ENCODE measurements at regions of chr4 and their contacts with region 1.

Region 1: DNA sequence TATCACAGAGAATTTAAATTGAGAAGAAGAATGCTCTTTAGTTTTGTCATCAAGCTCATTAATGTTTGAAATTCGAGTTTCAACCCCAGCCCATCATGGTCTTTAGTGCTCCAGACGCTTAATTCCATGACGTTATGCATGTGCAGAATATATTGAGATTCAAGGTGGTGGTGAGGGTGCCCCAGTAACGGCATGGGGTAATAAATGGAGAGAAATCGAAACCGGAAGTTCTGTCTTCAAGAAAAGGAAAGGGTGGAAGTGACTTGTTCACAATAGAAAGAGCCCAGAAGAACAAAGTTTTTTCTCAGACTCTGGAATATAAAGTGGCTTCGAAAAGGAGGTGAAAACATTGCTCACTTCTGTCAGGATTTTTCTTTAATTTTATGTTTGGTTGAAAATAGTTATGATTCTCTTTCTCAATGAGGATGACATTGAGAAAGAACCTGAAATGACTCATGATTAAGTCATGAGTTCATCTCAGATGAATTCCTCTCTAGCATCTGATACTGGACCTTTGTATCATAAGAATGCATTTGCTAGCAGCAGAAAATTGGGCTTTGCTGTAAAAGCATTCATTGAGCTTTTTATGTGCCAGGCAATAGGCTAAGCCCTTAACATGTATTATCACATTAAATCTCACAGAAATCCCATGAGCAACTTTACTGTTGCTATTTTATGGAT is 779 bp upstream of the DDX60L start:
- DNase-seq: peak; percentile 28 to 71
- H3K4me3 ChIP-seq: peak overlapping the region; percentile 82
- H3K27ac ChIP-seq: peak overlapping the region; percentile 95
- H3K4me1 ChIP-seq: peaks cover 30% of the 10 kb centered on the region
- H3K27me3 ChIP-seq: no peaks in the 10 kb centered on the region
- CTCF ChIP-seq: no peak

Region 2: GRCh38 chr4:168092176-168092712 is 388.8 kb before region 1 on chr4 and contains the start of gene ANXA10:
- CTCF ChIA-PET with region 1: no interaction called
- POLR2A ChIA-PET with region 1: no interaction called
- intact Hi-C with region 1: no loop called
- DNase-seq: no peak
- H3K4me3 ChIP-seq: no peak within 1 kb of the TSS
- H3K27ac ChIP-seq: no peak within 1 kb of the TSS
- H3K4me1 ChIP-seq: peaks cover 13% of the 10 kb centered on the region
- H3K27me3 ChIP-seq: no peaks in the 10 kb centered on the region
- CTCF ChIP-seq: no peak
- total RNA-seq, gene ANXA10: 1.1 and 3.0 TPM in 2 replicates

Region 3: DNA sequence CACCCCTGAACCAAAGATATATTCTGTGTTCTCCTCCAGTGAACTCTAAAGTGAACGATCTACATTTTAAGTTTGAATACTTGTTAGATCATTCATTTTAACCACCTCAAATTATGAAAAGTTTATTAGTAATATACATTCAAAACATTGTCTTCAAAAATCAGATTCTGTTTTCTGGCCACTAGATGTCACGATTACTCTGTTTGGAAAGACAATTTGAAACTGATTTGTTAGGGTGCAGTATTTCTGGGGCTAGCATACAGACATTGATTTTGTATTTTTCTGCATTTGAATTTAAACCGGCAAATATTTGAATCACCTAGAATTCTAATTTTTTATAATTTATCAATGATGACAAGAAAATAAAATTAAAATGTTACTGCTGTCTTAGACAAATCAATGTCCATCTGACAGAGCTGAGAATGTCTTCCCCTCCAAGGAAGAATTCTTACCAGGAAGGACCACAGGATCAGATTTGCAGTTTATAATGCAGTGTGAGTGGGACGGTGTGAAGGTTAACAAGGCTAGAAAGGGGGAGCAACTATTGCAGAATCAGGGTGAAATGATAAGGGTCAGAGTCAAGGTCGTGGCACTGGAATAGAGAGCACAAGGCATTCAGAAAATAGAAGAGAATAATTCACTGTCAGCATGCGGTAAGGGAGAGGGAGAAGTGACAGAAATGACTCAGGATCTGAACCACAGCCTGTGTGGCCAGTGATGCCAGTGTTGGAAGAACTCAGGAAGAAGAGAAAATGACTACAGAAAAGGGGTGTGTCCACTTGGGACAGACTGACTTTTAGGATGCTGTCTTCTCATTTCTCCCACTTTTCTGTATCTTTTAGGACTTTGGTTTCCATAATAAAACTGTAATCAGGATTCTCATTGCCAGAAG is 297.1 kb before region 1 on chr4:
- CTCF ChIA-PET with region 1: no interaction called
- POLR2A ChIA-PET with region 1: no interaction called
- intact Hi-C with region 1: loop called (anchors 10 kb)
- DNase-seq: no peak
- H3K4me3 ChIP-seq: no peak overlapping the region
- H3K27ac ChIP-seq: no peak overlapping the region
- H3K4me1 ChIP-seq: no peaks in the 10 kb centered on the region
- H3K27me3 ChIP-seq: no peaks in the 10 kb centered on the region
- CTCF ChIP-seq: peak; percentile 78

Region 4: GRCh38 chr4:168421671-168422070 is 59.4 kb before region 1 on chr4:
- CTCF ChIA-PET with region 1: no interaction called
- POLR2A ChIA-PET with region 1: no interaction called
- intact Hi-C with region 1: loop called (anchors 5 kb)
- DNase-seq: peak; percentile 44 to 52
- H3K4me3 ChIP-seq: no peak overlapping the region
- H3K27ac ChIP-seq: no peak overlapping the region
- H3K4me1 ChIP-seq: peaks cover 14% of the 10 kb centered on the region
- H3K27me3 ChIP-seq: no peaks in the 10 kb centered on the region
- CTCF ChIP-seq: no peak

Region 5: GRCh38 chr4:168551945-168552695 is 71.0 kb after region 1 on chr4:
- CTCF ChIA-PET with region 1: no interaction called
- POLR2A ChIA-PET with region 1: interaction called, 19 read pairs
- intact Hi-C with region 1: no loop called
- DNase-seq: no peak
- H3K4me3 ChIP-seq: no peak overlapping the region
- H3K27ac ChIP-seq: peak overlapping the region; percentile 51
- H3K4me1 ChIP-seq: peaks cover 13% of the 10 kb centered on the region; the same call in 1 of the 2 replicates
- H3K27me3 ChIP-seq: no peaks in the 10 kb centered on the region
- CTCF ChIP-seq: no peak

Region 6: DNA sequence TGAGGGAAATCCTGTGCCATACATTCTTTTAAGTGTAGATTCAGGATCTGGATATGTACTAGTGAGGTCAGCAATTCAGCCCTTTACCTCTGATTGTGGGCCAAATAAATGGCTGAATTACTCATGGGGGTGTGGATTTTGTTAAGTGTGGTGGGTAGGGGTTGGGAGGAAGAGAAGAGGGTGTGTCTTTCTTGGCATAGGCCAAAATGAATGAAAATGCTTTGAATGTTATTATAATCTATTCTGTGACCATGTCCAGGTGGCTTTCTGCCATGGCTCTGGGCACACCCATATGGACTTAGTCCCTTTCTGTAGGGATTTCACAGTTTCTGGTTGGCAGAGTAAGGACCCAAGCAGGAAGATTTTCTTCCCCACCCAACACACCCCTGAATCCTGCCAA is 284.7 kb after region 1 on chr4:
- CTCF ChIA-PET with region 1: no interaction called
- POLR2A ChIA-PET with region 1: no interaction called
- intact Hi-C with region 1: loop called (anchors 5 kb)
- DNase-seq: peak in 1 of 2 experiments; percentile 73
- H3K4me3 ChIP-seq: no peak overlapping the region
- H3K27ac ChIP-seq: no peak overlapping the region
- H3K4me1 ChIP-seq: no peaks in the 10 kb centered on the region
- H3K27me3 ChIP-seq: no peaks in the 10 kb centered on the region
- CTCF ChIP-seq: no peak

Region 7: GRCh38 chr4:169079942-169080827 is 599.1 kb after region 1 on chr4:
- CTCF ChIA-PET with region 1: no interaction called
- POLR2A ChIA-PET with region 1: no interaction called
- intact Hi-C with region 1: loop called (anchors 10 kb)
- DNase-seq: peak in 1 of 2 experiments; percentile 15
- H3K4me3 ChIP-seq: no peak overlapping the region
- H3K27ac ChIP-seq: no peak overlapping the region
- H3K4me1 ChIP-seq: no peaks in the 10 kb centered on the region
- H3K27me3 ChIP-seq: no peaks in the 10 kb centered on the region
- CTCF ChIP-seq: no peak

Measured in PC-9 (cell line).